Esophagus muscularis mucosa (tissue), 4 donors: ENCODE measurements at regions of chrX and their contacts with region 1.

Region 1: GRCh38 chrX:155094468-155095061 is 23.3 kb downstream of the BRCC3 start:
- DNase-seq: no peak
- H3K4me3 ChIP-seq: no peak overlapping the region
- H3K27ac ChIP-seq: no peak overlapping the region
- H3K4me1 ChIP-seq: no peaks in the 10 kb centered on the region
- H3K27me3 ChIP-seq: no peaks in the 10 kb centered on the region
- CTCF ChIP-seq: peak; percentile 53 to 62 (median 53)
- EP300 ChIP-seq: no peak
- POLR2A ChIP-seq: no peak

Region 2: DNA sequence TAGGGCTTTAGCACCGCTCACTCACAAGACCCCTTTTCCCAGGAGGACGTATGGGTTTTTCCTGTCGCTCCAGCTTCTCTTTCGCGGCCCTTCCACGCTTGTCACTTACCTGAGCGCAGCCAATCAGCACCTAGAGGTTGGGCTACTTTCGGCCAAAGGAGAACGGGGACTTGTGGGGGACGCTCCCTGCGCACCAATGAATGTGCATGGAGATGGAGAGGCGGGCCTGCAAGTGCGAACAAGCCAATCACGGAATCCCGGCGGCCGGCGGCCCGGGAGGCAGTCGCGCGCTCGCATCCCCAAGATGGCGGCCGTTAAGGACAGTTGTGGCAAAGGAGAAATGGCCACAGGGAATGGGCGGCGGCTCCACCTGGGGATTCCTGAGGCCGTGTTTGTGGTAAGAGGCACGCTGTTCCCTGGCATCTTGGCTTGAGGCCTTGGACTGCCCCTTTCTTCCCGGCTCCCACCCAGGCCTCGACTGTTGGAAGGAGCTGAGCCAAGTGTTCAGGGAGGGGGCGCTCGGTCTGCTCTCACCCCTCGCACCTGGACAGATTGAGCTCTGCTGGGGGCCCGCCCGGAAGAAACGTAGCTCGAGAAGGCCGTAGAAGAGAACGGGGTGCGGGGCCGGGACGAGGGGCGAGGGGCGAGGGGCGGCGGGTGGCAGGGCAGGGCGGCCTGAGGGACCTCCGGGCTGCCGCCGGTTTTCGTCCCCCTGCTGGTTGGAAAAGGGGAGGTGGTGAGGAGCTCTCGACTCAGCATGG is 121.8 kb after region 1 on chrX and contains the start of gene VBP1:
- intact Hi-C with region 1: loop called (anchors 10 kb)
- DNase-seq: peak; percentile 95
- H3K4me3 ChIP-seq: peak within 1 kb of the TSS; percentile 65 to 83 (median 76)
- H3K27ac ChIP-seq: peak within 1 kb of the TSS; percentile 88 to 93 (median 91)
- H3K4me1 ChIP-seq: peaks cover 14 to 24% (median 21%) of the 10 kb centered on the region in 4 donors
- H3K27me3 ChIP-seq: no peaks in the 10 kb centered on the region
- CTCF ChIP-seq: peak in 2 of 3 experiments; percentile 35 to 58
- EP300 ChIP-seq: no peak
- POLR2A ChIP-seq: no peak
- total RNA-seq, gene VBP1: 26.5 to 41.5 (median 37.7) TPM

Region 3: GRCh38 chrX:155682834-155683233 is 588.3 kb after region 1 on chrX:
- intact Hi-C with region 1: no loop called
- DNase-seq: no peak
- H3K4me3 ChIP-seq: no peak overlapping the region
- H3K27ac ChIP-seq: no peak overlapping the region
- H3K4me1 ChIP-seq: no peaks in the 10 kb centered on the region
- H3K27me3 ChIP-seq: no peaks in the 10 kb centered on the region
- CTCF ChIP-seq: no peak
- EP300 ChIP-seq: no peak
- POLR2A ChIP-seq: no peak

Region 4: DNA sequence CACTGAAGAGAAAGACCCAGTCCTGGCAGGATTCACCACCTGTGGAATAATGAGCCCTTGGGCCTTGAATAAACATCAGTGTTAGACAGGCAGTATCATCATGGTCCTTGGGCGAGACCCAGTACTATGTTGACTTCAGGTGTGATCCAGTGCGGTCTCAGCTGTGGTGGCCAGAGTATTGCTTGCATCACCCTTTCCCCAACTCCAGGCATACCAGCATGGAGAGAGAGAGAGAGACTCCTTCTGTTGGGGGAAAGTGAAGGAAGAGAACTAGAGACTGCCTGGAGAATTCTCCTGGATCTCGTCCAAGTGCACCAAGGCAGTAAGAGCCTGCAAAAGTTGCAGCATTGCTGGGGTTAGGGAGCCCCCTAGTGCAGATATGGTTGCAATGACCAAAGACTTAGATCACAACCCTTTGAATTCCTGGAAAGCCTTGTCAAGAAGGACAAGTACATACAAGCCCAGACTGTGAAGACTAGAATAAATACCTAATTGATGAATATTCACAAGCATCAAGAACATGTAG is 725.5 kb after region 1 on chrX:
- intact Hi-C with region 1: loop called (anchors 2 kb)
- DNase-seq: no peak
- H3K4me3 ChIP-seq: no peak overlapping the region
- H3K27ac ChIP-seq: no peak overlapping the region
- H3K4me1 ChIP-seq: no peaks in the 10 kb centered on the region
- H3K27me3 ChIP-seq: no peaks in the 10 kb centered on the region
- CTCF ChIP-seq: peak; percentile 45 to 58 (median 47)
- EP300 ChIP-seq: no peak
- POLR2A ChIP-seq: no peak